Common myeloid progenitor, CD34-positive (primary cell): ENCODE measurements at regions of chr7 and their contacts with region 1.

Region 1: GRCh38 chr7:141674702-141675101 is 27.3 kb downstream of the DENND11 start:
- DNase-seq: peak in 1 of 3 donors; percentile 23
- H3K4me3 ChIP-seq: no peak overlapping the region
- H3K27ac ChIP-seq: no peak overlapping the region
- H3K4me1 ChIP-seq: peaks cover 14 to 27% (median 20%) of the 10 kb centered on the region in 4 experiments
- H3K27me3 ChIP-seq: no peaks in the 10 kb centered on the region

Region 2: DNA sequence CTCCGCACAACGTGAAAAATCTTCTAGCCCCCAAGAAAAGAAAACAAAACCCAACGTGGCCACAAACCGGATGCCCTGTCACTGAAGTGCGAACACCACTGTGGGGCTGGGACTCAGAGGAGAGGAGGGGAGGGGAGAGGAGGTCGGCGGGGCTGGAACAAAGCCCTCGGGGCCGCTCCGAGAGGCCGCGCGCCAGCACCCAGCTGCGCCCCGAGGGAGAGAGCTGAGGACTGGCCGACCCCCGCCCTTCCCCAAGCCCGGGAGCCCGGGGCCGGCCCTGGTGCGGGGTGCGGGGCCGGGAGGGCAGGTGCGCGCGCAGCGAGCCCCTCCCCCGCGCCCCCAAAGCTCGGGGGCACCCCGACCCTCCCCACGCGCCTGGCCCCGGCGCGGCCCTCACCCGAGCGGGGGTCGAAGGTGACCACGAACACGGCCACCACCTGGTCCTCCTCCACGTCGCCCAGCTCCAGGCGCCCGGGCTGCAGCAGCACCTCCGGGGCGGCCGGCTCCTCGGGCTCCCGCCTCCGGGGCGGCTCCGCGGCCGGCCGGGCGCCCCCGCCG is 26.9 kb after region 1 on chr7:
- CTCF ChIA-PET with region 1: interaction called, 18 read pairs
- POLR2A ChIA-PET with region 1: interaction called, 12 read pairs
- DNase-seq: peak; percentile 65 to 91 (median 89)
- H3K4me3 ChIP-seq: peak overlapping the region; percentile 69 to 91 (median 77)
- H3K27ac ChIP-seq: peak overlapping the region in 1 of 2 experiments; percentile 75
- H3K4me1 ChIP-seq: peaks cover 0 to 53% (median 27%) of the 10 kb centered on the region in 4 experiments
- H3K27me3 ChIP-seq: peaks cover 0 to 3% (median 0%) of the 10 kb centered on the region in 5 experiments

Region 3: DNA sequence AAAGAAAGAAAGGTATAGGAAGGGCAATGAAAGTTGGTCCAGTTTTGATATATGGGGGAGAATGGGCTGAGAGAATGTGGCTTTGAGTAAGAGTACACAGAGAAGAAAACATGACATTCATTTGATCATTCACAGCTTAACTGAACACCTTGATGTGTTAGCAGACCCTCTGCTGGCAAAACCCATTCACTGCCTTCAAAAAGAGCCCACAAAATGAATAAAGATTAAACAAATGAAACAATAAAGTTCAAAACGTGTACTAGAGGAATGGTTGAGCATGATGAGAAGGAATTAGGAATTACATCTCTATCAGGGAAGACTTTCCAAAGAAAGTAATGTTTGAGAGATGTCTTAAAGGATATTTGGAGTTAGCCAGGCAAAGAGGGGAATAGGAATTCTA is 35.6 kb after region 1 on chr7:
- CTCF ChIA-PET with region 1: interaction called, 16 read pairs
- POLR2A ChIA-PET with region 1: no interaction called
- DNase-seq: peak in 2 of 3 donors; percentile 34 to 36
- H3K4me3 ChIP-seq: no peak overlapping the region
- H3K27ac ChIP-seq: no peak overlapping the region
- H3K4me1 ChIP-seq: no peaks in the 10 kb centered on the region
- H3K27me3 ChIP-seq: no peaks in the 10 kb centered on the region

Region 4: GRCh38 chr7:141737834-141738591 is 63.3 kb after region 1 on chr7 and contains the start of gene SSBP1:
- CTCF ChIA-PET with region 1: interaction called, 11 read pairs
- POLR2A ChIA-PET with region 1: interaction called, 3 read pairs
- DNase-seq: peak; percentile 99
- H3K4me3 ChIP-seq: peak within 1 kb of the TSS; percentile 77 to 100 (median 98)
- H3K27ac ChIP-seq: peak within 1 kb of the TSS; percentile 87 to 93
- H3K4me1 ChIP-seq: peaks cover 9 to 26% (median 20%) of the 10 kb centered on the region in 4 experiments
- H3K27me3 ChIP-seq: no peaks in the 10 kb centered on the region